Stomach (tissue), 19 donors: ENCODE measurements at regions of chr1 and their contacts with region 1.

Region 1: GRCh38 chr1:23691499-23692307 is at the start of gene RPL11:
- DNase-seq: peak; percentile 94 to 98
- H3K4me3 ChIP-seq: peak within 1 kb of the TSS; percentile 75 to 90 (median 84)
- H3K27ac ChIP-seq: peak within 1 kb of the TSS; percentile 79 to 92 (median 90)
- H3K4me1 ChIP-seq: peaks cover 36 to 51% (median 45%) of the 10 kb centered on the region in 4 donors
- H3K27me3 ChIP-seq: no peaks in the 10 kb centered on the region
- CTCF ChIP-seq: peak in 5 of 7 experiments; percentile 81 to 89 (median 84)
- EP300 ChIP-seq: no peak
- POLR2A ChIP-seq: peak in 2 of 4 donors; percentile 56 to 71
- total RNA-seq, gene RPL11: 255 to 1,618 (median 778) TPM

Region 2: DNA sequence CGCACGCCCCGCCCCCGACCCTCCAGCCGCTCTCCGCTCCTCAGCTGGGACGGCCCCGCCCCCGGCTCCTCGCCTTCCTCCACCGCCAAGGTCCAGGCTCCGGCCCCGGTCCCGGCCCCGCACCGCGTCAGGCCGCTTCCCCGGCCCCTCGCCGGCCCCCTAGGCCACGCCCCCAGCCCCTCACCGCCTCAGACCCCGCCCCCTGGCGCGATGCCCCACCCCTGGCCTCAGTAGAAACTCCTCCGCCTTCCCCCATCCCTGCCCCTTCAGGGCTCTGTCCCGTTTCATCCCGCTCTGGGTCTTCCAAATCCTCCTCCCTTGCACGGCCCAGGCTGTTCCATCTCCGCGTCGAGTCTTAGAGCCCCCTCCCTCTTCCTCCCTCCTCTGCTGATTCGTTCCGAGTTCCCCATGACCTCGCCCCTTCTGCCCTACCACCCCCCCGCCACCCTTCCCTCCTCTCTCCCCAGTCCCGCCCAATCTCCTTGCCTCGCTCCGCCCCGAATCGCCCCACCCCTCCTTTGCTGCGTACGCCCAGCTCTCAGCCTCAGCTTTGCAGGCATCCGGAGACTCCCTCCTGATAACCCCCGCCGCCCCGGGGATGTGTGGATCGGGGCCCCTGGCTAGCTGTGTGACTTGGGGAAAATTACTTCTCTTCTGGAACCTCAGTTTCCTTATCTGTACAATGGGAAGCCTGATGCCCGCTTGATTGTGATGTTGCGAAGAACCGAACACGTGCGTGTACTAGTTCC is 207.3 kb before region 1 on chr1:
- intact Hi-C with region 1: no loop called
- DNase-seq: peak; percentile 93 to 98
- H3K4me3 ChIP-seq: peak overlapping the region; percentile 63 to 98 (median 92)
- H3K27ac ChIP-seq: peak overlapping the region; percentile 81 to 96 (median 90)
- H3K4me1 ChIP-seq: peaks cover 18 to 51% (median 40%) of the 10 kb centered on the region in 4 donors
- H3K27me3 ChIP-seq: peaks cover 0 to 18% (median 0%) of the 10 kb centered on the region in 3 donors
- CTCF ChIP-seq: no peak
- EP300 ChIP-seq: no peak
- POLR2A ChIP-seq: no peak

Region 3: DNA sequence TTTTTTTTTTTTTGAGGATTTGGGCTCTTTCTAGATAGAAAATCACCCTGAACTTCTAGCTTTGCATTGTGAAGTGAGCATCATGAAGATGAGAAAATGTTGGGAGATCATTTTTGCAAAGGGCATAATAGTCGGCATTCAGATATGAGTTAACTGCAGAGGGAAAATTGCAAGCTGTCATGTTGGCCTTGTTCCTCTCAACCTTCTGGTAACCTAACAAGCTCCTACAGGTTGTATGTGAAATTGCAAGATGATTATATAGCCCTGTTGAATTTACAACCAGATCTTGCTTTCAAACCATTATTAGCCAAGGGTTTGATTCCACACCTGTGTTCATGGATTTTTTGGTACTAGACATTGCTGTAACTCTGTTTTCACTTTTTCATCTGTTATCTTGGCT is 53.8 kb after region 1 on chr1:
- intact Hi-C with region 1: loop called (anchors 5 kb)
- DNase-seq: peak in 1 of 2 donors; percentile 52
- H3K4me3 ChIP-seq: peak overlapping the region; percentile 91 to 100 (median 95)
- H3K27ac ChIP-seq: peak overlapping the region in 3 of 5 donors; percentile 1 to 95 (median 11)
- H3K4me1 ChIP-seq: peaks cover 42 to 67% (median 61%) of the 10 kb centered on the region in 4 donors
- H3K27me3 ChIP-seq: no peaks in the 10 kb centered on the region
- CTCF ChIP-seq: peak in 3 of 7 experiments; percentile 12 to 52 (median 45)
- EP300 ChIP-seq: no peak
- POLR2A ChIP-seq: no peak

Region 4: DNA sequence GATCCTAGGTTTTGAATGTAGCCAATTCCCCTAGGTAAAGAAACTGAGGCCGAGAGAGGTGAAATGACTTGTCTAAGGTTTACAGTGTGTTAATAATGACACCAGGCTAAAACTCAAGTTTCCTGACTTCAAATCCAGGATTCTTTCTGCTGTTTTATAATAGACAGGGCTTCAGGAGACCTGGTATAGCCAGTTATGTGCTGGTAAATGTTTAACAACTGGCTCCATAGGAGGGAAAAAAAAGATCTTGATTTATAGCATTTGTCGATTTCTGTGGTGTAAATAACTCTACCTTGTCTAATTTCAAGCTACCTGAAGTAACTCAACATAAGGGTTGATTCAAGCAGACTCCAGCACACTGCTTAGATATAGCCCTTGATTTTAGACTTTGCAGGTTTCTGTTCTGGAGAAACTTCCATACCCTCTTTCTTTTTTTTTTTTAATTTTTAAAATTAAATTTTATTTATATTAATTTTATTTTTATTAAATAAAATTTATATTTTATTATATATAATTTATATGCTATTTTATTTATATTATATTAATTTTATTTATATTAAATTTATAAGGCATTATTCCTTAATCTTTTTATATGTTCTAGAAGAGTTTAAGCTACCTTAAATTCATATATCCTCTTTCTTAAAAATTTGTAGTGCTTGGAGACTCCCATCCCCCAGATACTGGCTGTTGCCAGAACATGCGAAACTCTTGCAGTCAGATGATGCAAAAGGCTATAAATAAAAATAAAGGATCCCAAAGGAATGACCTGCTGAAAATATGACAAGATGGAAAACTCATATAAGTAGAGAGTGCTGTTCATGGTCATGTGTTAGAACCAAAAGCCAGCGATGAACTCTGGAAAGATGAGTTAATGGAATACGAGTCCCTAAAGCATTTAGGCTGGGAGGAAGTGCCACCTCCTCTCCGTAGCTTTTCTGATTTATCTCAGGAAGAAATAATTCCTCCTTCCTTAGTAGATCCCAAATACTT is 323.8 kb after region 1 on chr1:
- intact Hi-C with region 1: no loop called
- DNase-seq: peak in 1 of 2 donors; percentile 84
- H3K4me3 ChIP-seq: no peak overlapping the region
- H3K27ac ChIP-seq: peak overlapping the region in 4 of 5 donors; percentile 53 to 93 (median 91)
- H3K4me1 ChIP-seq: peaks cover 18 to 65% (median 49%) of the 10 kb centered on the region in 4 donors
- H3K27me3 ChIP-seq: no peaks in the 10 kb centered on the region
- CTCF ChIP-seq: no peak
- EP300 ChIP-seq: no peak
- POLR2A ChIP-seq: no peak